Heart right ventricle (tissue), 16 donors: ENCODE measurements at regions of chr5 and their contacts with region 1.

Region 1: GRCh38 chr5:133868946-133869518 is 99.4 kb downstream of the C5orf15 start:
- DNase-seq: peak; percentile 74
- ATAC-seq: peak; percentile 72 to 90 (median 81)
- H3K4me3 ChIP-seq: peak overlapping the region in 8 of 10 donors; percentile 28 to 47 (median 45)
- H3K27ac ChIP-seq: peak overlapping the region in 6 of 10 donors; percentile 15 to 52 (median 40)
- H3K4me1 ChIP-seq: peaks cover 0 to 10% (median 7%) of the 10 kb centered on the region in 9 donors
- H3K27me3 ChIP-seq: peaks cover 0 to 4% (median 0%) of the 10 kb centered on the region in 7 donors
- CTCF ChIP-seq: peak; percentile 47 to 89 (median 77)

Region 2: DNA sequence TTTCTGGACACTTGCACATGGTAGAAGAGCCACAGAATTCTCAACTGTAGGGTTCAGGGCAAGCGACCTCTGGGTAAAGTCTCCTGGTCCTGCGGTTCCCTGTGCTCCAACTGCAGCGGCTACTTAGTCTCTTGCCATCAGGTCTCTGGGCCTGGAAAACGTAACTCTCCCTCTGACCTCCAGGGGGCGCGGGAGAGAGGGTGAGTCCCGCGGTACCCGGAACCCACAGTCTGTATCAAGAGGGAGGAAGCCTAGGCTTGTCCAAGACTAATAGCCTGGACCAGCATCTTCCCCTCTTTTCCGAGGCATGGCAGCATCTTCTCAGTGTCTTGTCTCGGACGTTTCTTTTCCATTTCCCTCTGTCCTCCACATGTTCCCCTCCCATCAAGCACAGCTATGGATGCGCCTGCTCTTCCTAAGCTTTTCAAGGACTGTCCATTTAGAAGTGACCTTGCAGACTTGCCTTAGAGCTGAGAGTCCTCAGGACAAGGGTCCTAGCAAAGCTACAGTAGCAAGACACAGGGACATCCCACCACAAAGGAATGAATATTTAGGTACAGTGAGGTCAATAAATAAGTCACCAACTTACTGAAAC is 316.0 kb before region 1 on chr5:
- intact Hi-C with region 1: loop called in 3 of 10 experiments (anchors 5 to 10 kb)
- DNase-seq: peak; percentile 17 to 28
- ATAC-seq: peak in 1 of 8 donors; percentile 41
- H3K4me3 ChIP-seq: no peak overlapping the region
- H3K27ac ChIP-seq: no peak overlapping the region
- H3K4me1 ChIP-seq: no peaks in the 10 kb centered on the region
- H3K27me3 ChIP-seq: peaks cover 0 to 47% (median 34%) of the 10 kb centered on the region in 7 donors
- CTCF ChIP-seq: peak; percentile 20 to 78 (median 60)

Region 3: GRCh38 chr5:133754575-133755169 is 114.4 kb before region 1 on chr5:
- intact Hi-C with region 1: loop called in 8 of 10 experiments (anchors 2 to 10 kb)
- DNase-seq: no peak
- ATAC-seq: peak in 2 of 8 donors; percentile 51 to 59
- H3K4me3 ChIP-seq: no peak overlapping the region
- H3K27ac ChIP-seq: no peak overlapping the region
- H3K4me1 ChIP-seq: no peaks in the 10 kb centered on the region
- H3K27me3 ChIP-seq: peaks cover 0 to 36% (median 23%) of the 10 kb centered on the region in 7 donors
- CTCF ChIP-seq: peak in 8 of 9 donors; percentile 17 to 66 (median 60)

Region 4: GRCh38 chr5:133779828-133780475 is 89.1 kb before region 1 on chr5:
- intact Hi-C with region 1: loop called in 1 of 10 experiments (anchors 10 kb)
- DNase-seq: no peak
- ATAC-seq: peak in 5 of 8 donors; percentile 39 to 49 (median 46)
- H3K4me3 ChIP-seq: no peak overlapping the region
- H3K27ac ChIP-seq: peak overlapping the region in 4 of 10 donors; percentile 28 to 50 (median 40)
- H3K4me1 ChIP-seq: peaks cover 0 to 4% (median 0%) of the 10 kb centered on the region in 9 donors
- H3K27me3 ChIP-seq: no peaks in the 10 kb centered on the region
- CTCF ChIP-seq: no peak

Region 5: DNA sequence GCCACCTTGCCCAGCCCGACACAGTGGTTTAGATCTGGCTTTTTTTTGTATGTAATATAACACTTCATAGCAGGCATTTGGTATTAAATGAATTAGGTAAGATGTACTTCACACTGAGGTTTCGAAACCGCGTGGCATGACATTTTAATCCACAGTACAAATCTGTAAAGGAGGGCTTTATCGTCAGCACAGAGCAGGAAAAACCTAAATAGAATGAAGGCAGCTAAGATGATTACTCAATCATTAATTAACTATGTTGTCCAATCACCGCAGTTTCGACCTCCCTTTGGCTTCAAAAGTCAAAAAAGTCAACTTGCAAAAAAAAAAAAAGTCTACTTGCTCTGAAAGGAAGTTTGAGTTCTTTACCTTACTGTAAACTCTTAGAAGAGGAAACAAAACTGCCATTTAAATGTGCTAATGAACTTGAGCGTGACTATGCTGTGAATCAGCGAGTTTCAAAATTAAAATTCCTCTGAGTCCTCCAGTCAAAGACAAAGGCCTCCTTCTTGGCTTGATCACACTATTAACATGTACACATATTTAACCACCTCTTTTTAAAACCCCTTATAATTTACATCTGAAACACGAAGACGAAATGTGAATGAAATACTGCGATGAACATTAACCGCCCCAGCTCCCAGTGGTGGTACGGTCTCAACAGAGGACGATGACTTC is 778.9 kb after region 1 on chr5:
- intact Hi-C with region 1: no loop called
- DNase-seq: no peak
- ATAC-seq: peak in 5 of 8 donors; percentile 2 to 24 (median 10)
- H3K4me3 ChIP-seq: peak overlapping the region; percentile 71 to 99 (median 88)
- H3K27ac ChIP-seq: peak overlapping the region; percentile 88 to 99 (median 94)
- H3K4me1 ChIP-seq: peaks cover 9 to 42% (median 40%) of the 10 kb centered on the region in 9 donors
- H3K27me3 ChIP-seq: no peaks in the 10 kb centered on the region
- CTCF ChIP-seq: no peak